GM12878 (cell line): ENCODE measurements at regions of chr5 and their contacts with region 1.

Region 1: DNA sequence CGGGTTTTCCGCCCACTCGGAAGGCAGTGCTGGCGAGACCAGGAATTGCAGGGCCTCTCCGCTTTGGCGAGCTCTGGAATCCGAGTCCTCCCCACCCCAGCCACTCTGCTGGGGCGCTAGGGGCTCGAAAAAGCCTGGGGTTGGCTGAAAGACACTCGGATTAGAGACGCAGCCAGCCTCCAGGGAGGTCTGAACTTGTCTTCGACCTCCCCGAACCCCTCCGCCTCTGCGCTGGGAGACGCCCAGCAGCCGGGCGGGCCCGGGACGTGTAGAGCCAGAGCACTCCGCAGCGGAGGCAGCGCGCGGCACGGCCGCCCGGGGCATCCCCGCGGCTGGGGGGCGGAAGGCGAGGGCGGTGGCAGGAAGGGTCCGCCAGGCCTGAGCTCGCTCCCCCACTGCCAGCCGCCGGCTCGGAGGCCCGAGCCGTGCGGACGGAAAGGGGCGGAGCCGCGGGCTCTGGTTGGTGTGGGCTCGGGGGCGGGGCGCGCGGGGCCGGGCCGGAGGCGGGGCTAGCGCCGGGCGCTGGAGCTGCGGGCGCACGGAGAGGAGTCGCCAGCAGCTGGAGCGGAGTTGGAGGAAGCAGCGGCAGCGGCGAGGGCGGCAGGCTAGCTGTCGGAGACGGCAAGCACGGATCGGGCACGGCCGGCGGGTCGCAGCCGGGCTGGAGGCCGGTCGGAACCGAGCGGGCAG is at the start of gene PIK3R1:
- DNase-seq: peak; percentile 74
- ATAC-seq: peak; percentile 87
- H3K4me3 ChIP-seq: peak within 1 kb of the TSS; percentile 93
- H3K27ac ChIP-seq: peak within 1 kb of the TSS; percentile 82
- H3K4me1 ChIP-seq: peaks cover 4% of the 10 kb centered on the region; the same call in 1 of the 2 replicates
- H3K27me3 ChIP-seq: no peaks in the 10 kb centered on the region
- CTCF ChIP-seq: peak in 2 of 3 experiments; percentile 26; a peak in 2 of 6 replicates
- EP300 ChIP-seq: 0 out of 4 replicates have a peak, but pooled peaks of 1 of the 2 experiments have one; percentile 31
- POLR2A ChIP-seq: peak; percentile 94
- RAD21 ChIP-seq: peak; percentile 25; the same call in 1 of the 2 replicates
- polyA plus RNA-seq, gene PIK3R1: 7.8 to 8.0 TPM

Region 2: DNA sequence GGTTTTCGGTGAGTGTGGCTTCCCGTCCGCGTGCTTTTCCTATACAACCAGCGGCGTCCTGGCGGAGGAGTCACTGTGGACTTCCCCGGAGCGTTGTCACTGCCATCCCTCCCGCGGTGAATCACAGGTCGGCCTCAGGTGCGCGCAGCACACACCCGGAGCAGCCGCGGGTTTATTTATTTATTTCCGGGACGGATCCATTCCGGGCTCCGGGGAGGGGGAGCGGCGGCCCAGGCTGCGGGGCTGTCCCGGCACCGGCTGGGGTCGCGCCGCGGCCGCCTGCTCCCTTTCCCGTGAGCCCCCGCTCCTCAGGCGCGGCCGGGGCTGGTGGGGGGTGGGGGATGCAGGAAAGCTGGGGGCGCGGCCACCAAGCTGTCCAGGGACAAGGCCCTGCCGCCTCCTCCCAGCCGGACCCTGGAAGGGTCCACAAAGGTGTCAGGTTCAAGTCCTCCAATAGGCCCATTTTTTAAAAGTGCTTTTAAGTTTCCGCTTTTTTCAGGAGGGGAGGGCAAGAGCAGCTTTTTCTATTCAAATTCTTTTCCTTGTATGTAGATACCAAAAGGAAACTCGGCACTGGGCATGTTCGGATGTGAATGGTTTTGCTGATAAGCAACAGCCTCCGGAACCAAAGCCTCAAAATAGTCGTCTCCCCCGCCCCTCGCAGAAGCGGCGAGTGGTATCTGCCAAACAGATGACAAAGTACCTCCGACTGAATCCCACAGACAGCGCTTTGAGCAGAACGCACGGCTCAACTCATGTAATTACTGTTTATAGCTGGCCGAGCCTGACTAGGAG is 1211.2 kb before region 1 on chr5:
- CTCF ChIA-PET with region 1: no interaction called
- POLR2A ChIA-PET with region 1: no interaction called
- RAD21 ChIA-PET with region 1: no interaction called
- SMC1A ChIA-PET with region 1: no interaction called
- in situ Hi-C with region 1: no loop called
- intact Hi-C with region 1: no loop called
- DNase-seq: peak; percentile 9
- ATAC-seq: peak; percentile 73
- H3K4me3 ChIP-seq: peak overlapping the region; percentile 59; the same call in 1 of the 2 replicates
- H3K27ac ChIP-seq: no peak overlapping the region
- H3K4me1 ChIP-seq: no peaks in the 10 kb centered on the region
- H3K27me3 ChIP-seq: peaks cover 2 to 3% of the 10 kb centered on the region in 2 experiments; a peak in 2 of 4 replicates
- CTCF ChIP-seq: no peak
- EP300 ChIP-seq: no peak
- POLR2A ChIP-seq: no peak
- RAD21 ChIP-seq: no peak

Region 3: GRCh38 chr5:67809589-67809988 is 405.8 kb before region 1 on chr5:
- CTCF ChIA-PET with region 1: no interaction called
- POLR2A ChIA-PET with region 1: no interaction called
- RAD21 ChIA-PET with region 1: interaction called, 3 read pairs
- SMC1A ChIA-PET with region 1: interaction called, 3 read pairs
- in situ Hi-C with region 1: no loop called
- intact Hi-C with region 1: loop called (anchors 2 kb)
- DNase-seq: peak; percentile 83
- ATAC-seq: peak; percentile 82
- H3K4me3 ChIP-seq: no peak overlapping the region
- H3K27ac ChIP-seq: no peak overlapping the region
- H3K4me1 ChIP-seq: peaks cover 17% of the 10 kb centered on the region
- H3K27me3 ChIP-seq: no peaks in the 10 kb centered on the region
- CTCF ChIP-seq: no peak
- EP300 ChIP-seq: peak; percentile 68 to 73; a peak in 2 of 4 replicates
- POLR2A ChIP-seq: no peak
- RAD21 ChIP-seq: no peak

Region 4: DNA sequence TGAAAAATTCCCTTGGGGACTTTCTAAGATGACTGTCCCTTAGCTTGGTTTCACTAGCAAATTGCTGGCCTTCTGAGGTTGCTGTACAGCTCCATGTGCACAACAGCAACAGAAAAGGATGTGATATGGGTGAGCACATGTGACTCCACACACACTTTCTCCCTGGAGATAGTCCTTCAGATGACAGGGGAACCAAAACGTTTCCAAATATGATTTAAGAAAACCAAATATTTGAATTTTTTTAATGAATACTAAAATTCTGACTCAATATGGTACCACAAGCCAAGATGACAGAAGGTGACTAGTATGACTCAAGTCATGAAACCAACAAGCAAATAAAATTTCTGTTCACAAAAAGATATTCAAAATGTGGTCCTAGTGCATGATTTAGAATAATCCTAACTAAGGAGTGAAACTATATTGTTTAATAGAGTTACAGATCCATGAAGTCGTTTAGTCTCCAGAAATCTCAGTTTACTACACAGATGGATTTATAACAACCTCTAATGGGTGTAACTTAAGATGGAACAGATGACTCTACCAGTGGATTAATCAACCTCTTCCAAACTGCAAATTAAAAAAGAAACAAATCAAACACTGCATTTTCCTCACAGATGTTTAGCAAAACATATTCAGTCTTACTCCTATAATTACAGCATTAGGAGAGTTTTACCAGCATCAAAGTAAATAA is 144.6 kb before region 1 on chr5:
- CTCF ChIA-PET with region 1: no interaction called
- POLR2A ChIA-PET with region 1: no interaction called
- RAD21 ChIA-PET with region 1: interaction called, 3 read pairs
- SMC1A ChIA-PET with region 1: interaction called, 3 read pairs
- in situ Hi-C with region 1: no loop called
- intact Hi-C with region 1: loop called (anchors 1 kb)
- DNase-seq: peak; percentile 84
- ATAC-seq: peak; percentile 99
- H3K4me3 ChIP-seq: no peak overlapping the region
- H3K27ac ChIP-seq: peak overlapping the region; percentile 62; the same call in 1 of the 2 replicates
- H3K4me1 ChIP-seq: peaks cover 14% of the 10 kb centered on the region
- H3K27me3 ChIP-seq: no peaks in the 10 kb centered on the region
- CTCF ChIP-seq: no peak
- EP300 ChIP-seq: peak; percentile 29 to 74; a peak in 2 of 4 replicates
- POLR2A ChIP-seq: no peak
- RAD21 ChIP-seq: no peak

Region 5: DNA sequence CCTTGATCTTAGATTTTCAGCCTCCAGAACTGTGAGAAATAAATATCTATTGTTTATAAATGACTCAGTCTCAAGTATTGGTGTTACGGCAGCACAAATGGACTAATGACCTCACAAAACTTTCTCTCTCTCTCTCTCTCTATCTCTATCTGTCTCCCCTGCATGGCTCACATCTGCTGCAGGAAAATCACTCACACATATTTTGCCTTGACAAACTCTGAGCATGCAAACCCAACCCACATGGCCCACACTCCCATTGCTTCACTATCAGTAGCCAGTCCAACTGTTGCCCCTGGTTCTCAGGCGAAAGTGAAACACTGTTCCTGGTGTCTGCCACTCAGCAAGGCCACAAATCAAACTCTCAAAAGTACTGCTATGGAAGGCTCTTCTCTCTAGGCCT is 66.2 kb before region 1 on chr5:
- CTCF ChIA-PET with region 1: no interaction called
- POLR2A ChIA-PET with region 1: interaction called, 3 read pairs
- RAD21 ChIA-PET with region 1: interaction called, 3 read pairs
- SMC1A ChIA-PET with region 1: interaction called, 3 read pairs
- in situ Hi-C with region 1: no loop called
- intact Hi-C with region 1: loop called (anchors 2 kb)
- DNase-seq: no peak
- ATAC-seq: peak; percentile 65
- H3K4me3 ChIP-seq: no peak overlapping the region
- H3K27ac ChIP-seq: no peak overlapping the region
- H3K4me1 ChIP-seq: peaks cover 15% of the 10 kb centered on the region
- H3K27me3 ChIP-seq: no peaks in the 10 kb centered on the region
- CTCF ChIP-seq: no peak
- EP300 ChIP-seq: no peak
- POLR2A ChIP-seq: no peak
- RAD21 ChIP-seq: no peak

Region 6: DNA sequence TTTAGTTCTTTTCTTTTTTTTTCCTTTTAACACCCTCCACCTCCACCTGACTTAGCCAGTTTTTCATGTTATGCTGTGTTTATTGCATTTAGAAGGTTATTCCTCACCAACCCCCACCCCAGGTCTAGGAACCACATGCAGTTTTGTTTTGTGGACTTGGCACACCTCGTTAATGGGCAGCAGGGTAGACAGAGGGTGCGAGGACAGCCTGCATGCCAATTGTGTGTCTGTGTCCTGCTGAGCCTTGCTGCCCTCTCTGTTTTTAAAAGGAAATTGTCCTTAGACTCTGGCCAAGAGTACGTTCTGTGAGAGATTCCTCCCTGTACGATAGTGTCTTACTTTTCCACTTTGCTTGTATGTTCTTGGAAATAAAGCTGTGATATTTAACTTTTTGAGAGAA is 14.1 kb after region 1 on chr5:
- CTCF ChIA-PET with region 1: interaction called, 5 read pairs
- POLR2A ChIA-PET with region 1: interaction called, 12 read pairs
- RAD21 ChIA-PET with region 1: interaction called, 7 read pairs
- SMC1A ChIA-PET with region 1: interaction called, 39 read pairs
- in situ Hi-C with region 1: no loop called
- intact Hi-C with region 1: no loop called
- DNase-seq: no peak
- ATAC-seq: no peak
- H3K4me3 ChIP-seq: no peak overlapping the region
- H3K27ac ChIP-seq: no peak overlapping the region
- H3K4me1 ChIP-seq: peaks cover 3% of the 10 kb centered on the region; the same call in 1 of the 2 replicates
- H3K27me3 ChIP-seq: no peaks in the 10 kb centered on the region
- CTCF ChIP-seq: no peak
- EP300 ChIP-seq: no peak
- POLR2A ChIP-seq: no peak
- RAD21 ChIP-seq: no peak

Region 7: DNA sequence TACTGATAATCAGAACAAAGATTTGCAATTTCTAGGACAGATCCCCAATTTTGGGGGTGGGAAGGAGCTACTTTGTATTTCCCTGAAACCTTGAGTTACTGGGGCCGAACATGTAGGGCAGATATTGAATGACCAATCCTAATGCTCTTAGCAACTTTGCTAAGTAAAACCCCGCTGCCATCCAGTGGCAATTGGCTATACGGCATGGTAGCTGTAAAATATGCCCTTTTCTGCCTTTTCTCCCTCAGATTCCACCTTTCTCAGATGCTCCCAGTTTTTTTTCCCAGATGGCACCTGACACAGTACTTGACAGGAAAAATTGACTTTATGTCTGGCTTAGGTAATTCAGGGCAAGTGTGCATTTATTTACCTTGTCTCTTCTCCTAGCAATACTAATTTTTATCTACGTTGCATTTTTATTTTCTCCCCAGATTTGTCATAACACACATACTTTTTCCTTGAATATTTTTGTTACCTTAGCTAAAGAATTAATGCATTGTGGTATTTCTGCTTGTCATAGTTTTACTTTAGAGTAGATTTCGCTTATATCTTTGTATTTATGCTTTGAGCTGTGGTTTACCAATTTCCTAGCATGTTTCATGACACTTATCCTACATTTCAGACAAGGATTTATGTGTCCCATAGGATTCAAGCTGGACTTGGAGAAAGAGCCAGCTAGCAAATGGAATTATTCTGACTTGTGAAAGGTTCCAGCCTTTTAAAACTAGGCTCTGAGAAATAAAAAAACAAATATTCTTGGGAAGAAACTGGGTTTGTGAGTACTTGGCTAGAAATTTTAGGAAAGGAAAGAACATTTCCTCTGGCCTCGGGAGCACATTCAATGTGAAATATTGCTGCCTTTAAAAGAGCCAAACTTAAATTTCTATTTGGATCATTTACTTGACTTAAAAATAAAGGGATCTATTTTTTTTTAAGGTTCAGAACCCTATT is 37.6 kb after region 1 on chr5:
- CTCF ChIA-PET with region 1: interaction called, 12 read pairs
- POLR2A ChIA-PET with region 1: interaction called, 4 read pairs
- RAD21 ChIA-PET with region 1: interaction called, 7 read pairs
- SMC1A ChIA-PET with region 1: interaction called, 10 read pairs
- in situ Hi-C with region 1: no loop called
- intact Hi-C with region 1: no loop called
- DNase-seq: no peak
- ATAC-seq: peak; percentile 89
- H3K4me3 ChIP-seq: no peak overlapping the region
- H3K27ac ChIP-seq: no peak overlapping the region
- H3K4me1 ChIP-seq: no peaks in the 10 kb centered on the region
- H3K27me3 ChIP-seq: no peaks in the 10 kb centered on the region
- CTCF ChIP-seq: peak; percentile 76 to 81 (median 78)
- EP300 ChIP-seq: no peak
- POLR2A ChIP-seq: no peak
- RAD21 ChIP-seq: peak; percentile 97